Activated CD4-positive, alpha-beta memory T cell treated with anti-CD3 and anti-CD28 coated beads for 36 hours (primary cell): ENCODE measurements at regions of chr17 and their contacts with region 1.

Region 1: GRCh38 chr17:75784473-75785015 is at the start of gene UNK:
- DNase-seq: peak; percentile 97
- H3K4me3 Mint-ChIP-seq: peak within 1 kb of the TSS; percentile 90
- H3K27ac Mint-ChIP-seq: peak within 1 kb of the TSS; percentile 98
- H3K4me1 Mint-ChIP-seq: peaks cover 35% of the 10 kb centered on the region
- H3K27me3 Mint-ChIP-seq: peaks cover 1% of the 10 kb centered on the region
- total RNA-seq, gene UNK: 21.8 to 24.7 TPM

Region 2: DNA sequence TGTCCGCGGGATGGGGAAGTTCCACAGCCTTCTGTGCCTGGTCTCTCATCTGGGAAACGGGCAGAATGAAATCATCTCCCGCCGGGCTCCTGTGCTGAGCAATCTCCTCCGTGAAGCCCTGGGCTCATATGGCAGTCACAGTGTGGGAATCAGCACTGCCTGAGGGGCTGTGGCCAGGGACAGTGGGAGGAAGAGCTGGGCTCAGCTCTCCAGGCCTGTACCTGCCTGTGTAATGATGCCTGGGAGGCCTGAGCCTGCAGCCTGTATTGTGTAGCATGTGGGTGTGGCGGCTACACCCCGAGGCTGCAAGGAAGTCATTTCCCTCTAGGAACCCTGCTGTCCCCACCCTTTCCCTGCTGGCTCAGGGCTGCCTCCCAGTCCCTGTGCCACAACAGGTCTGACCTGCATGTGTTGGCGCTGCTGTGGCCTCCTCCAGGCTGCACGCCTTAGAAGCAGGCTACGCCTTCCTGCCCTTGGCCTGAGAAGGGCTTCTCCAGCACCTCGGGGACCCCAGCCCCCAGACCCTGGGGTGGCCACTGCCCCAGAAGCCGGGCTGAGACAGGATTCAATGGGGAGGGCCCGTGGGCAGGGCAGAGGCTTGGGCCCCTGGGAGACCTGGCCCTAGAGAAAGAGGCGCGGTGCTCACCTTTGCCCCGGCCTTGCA is 61.2 kb before region 1 on chr17:
- CTCF ChIA-PET with region 1: no interaction called
- POLR2A ChIA-PET with region 1: no interaction called
- intact Hi-C with region 1: no loop called
- DNase-seq: no peak
- H3K4me3 Mint-ChIP-seq: no peak overlapping the region
- H3K27ac Mint-ChIP-seq: no peak overlapping the region
- H3K4me1 Mint-ChIP-seq: peaks cover 3% of the 10 kb centered on the region
- H3K27me3 Mint-ChIP-seq: peaks cover 9% of the 10 kb centered on the region

Region 3: DNA sequence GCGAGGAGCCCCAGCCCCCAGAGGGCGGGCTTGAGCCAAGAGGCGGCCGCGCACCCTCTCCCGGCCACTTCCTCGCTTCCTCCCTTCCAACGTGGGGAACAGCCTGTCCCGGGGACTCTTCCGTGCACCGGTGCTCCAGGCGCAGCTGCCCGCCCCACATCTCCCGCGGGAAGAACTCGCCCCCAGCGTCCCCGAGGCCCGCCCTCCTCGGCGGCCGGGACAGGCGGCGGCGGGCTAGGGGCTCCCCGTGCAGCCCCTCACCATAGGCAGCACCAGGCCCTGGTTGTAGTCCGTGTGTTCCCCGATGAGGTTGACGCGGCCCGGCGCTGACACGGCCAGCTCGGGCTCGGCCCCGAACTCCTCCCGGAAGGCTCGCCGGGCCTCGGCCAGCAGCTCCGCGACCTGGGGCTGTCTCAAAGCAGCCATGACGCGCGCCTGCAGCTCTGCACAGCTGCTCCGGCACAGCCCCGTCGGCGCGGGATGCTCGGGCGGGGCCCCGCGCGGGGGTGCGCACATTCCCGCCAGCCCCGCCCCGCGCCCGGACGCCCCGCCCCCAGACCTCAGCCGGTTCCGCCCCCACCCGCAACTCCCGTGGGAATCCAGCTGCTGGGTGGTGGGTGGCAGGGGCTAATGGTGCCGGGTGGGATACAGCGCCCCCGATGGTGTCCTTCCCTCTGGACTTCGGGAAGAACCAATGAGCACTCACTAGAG is 19.7 kb before region 1 on chr17 and contains the start of gene GALK1:
- CTCF ChIA-PET with region 1: interaction called, 15 read pairs
- POLR2A ChIA-PET with region 1: interaction called, 18 read pairs
- intact Hi-C with region 1: loop called (anchors 1 kb)
- DNase-seq: peak; percentile 83
- H3K4me3 Mint-ChIP-seq: peak within 1 kb of the TSS; percentile 79
- H3K27ac Mint-ChIP-seq: peak within 1 kb of the TSS; percentile 71
- H3K4me1 Mint-ChIP-seq: peaks cover 11% of the 10 kb centered on the region
- H3K27me3 Mint-ChIP-seq: no peaks in the 10 kb centered on the region
- total RNA-seq, gene GALK1: 69.3 to 69.7 TPM

Region 4: GRCh38 chr17:75845049-75845860 is 60.7 kb after region 1 on chr17:
- CTCF ChIA-PET with region 1: interaction called, 14 read pairs
- POLR2A ChIA-PET with region 1: interaction called, 12 read pairs
- intact Hi-C with region 1: no loop called
- DNase-seq: peak; percentile 83
- H3K4me3 Mint-ChIP-seq: peak overlapping the region; percentile 57
- H3K27ac Mint-ChIP-seq: peak overlapping the region; percentile 95
- H3K4me1 Mint-ChIP-seq: peaks cover 21% of the 10 kb centered on the region
- H3K27me3 Mint-ChIP-seq: no peaks in the 10 kb centered on the region

Region 5: GRCh38 chr17:75896415-75897159 is 112.0 kb after region 1 on chr17 and contains the start of gene TRIM65:
- CTCF ChIA-PET with region 1: interaction called, 6 read pairs
- POLR2A ChIA-PET with region 1: interaction called, 8 read pairs
- intact Hi-C with region 1: loop called (anchors 5 kb)
- DNase-seq: peak; percentile 87
- H3K4me3 Mint-ChIP-seq: peak within 1 kb of the TSS; percentile 84
- H3K27ac Mint-ChIP-seq: peak within 1 kb of the TSS; percentile 72
- H3K4me1 Mint-ChIP-seq: peaks cover 24% of the 10 kb centered on the region
- H3K27me3 Mint-ChIP-seq: no peaks in the 10 kb centered on the region
- total RNA-seq, gene TRIM65: 27.5 to 28.2 TPM

Region 6: DNA sequence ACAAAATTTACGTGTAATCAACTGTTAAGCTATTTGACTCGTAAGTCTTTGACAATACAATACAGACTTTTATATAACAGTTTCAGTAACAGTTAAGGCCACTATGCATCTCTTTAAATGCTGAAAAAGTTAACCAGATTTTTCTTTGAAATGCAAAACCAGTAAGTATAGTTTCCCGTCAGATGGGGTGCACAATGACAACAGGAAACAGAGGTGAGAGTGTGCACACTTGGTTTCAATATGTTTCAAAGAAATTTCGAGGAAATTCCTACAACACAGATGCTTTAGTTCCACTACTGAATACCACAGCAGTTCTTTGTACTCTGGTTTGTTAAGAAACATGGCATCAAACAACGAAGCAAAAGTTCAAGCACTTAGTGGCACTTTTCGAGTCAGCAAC is 407.4 kb after region 1 on chr17:
- CTCF ChIA-PET with region 1: no interaction called
- POLR2A ChIA-PET with region 1: no interaction called
- intact Hi-C with region 1: loop called (anchors 10 kb)
- DNase-seq: peak; percentile 55
- H3K4me3 Mint-ChIP-seq: peak overlapping the region; percentile 61
- H3K27ac Mint-ChIP-seq: peak overlapping the region; percentile 97
- H3K4me1 Mint-ChIP-seq: peaks cover 59% of the 10 kb centered on the region
- H3K27me3 Mint-ChIP-seq: no peaks in the 10 kb centered on the region

Region 7: GRCh38 chr17:76726231-76726775 is 941.8 kb after region 1 on chr17 and contains the start of gene JMJD6:
- CTCF ChIA-PET with region 1: no interaction called
- POLR2A ChIA-PET with region 1: no interaction called
- intact Hi-C with region 1: loop called (anchors 1 kb)
- DNase-seq: peak; percentile 98
- H3K4me3 Mint-ChIP-seq: peak within 1 kb of the TSS; percentile 96
- H3K27ac Mint-ChIP-seq: peak within 1 kb of the TSS; percentile 95
- H3K4me1 Mint-ChIP-seq: peaks cover 46% of the 10 kb centered on the region
- H3K27me3 Mint-ChIP-seq: no peaks in the 10 kb centered on the region
- total RNA-seq, gene JMJD6: 53.4 to 56.6 TPM